ENCODE measurements at regions of chr17 and their contacts with region 1.

Region 1: GRCh38 chr17:62703775-62704378 is 76.4 kb downstream of the MRC2 start:
- DNase-seq: peak; percentile 47 to 79 (median 68)
- H3K4me3 ChIP-seq: peak overlapping the region in 2 of 4 donors; percentile 24 to 87
- H3K27ac ChIP-seq: peak overlapping the region in 3 of 5 donors; percentile 29 to 68 (median 39)
- H3K4me1 ChIP-seq: peaks cover 4 to 11% of the 10 kb centered on the region in 2 donors
- H3K27me3 ChIP-seq: no peaks in the 10 kb centered on the region
- CTCF ChIP-seq: peak; percentile 41 to 89 (median 72)
- POLR2A ChIP-seq: no peak

Region 2: GRCh38 chr17:62739645-62740388 is 35.9 kb after region 1 on chr17:
- intact Hi-C with region 1: no loop called
- DNase-seq: no peak
- H3K4me3 ChIP-seq: no peak overlapping the region
- H3K27ac ChIP-seq: no peak overlapping the region
- H3K4me1 ChIP-seq: no peaks in the 10 kb centered on the region
- H3K27me3 ChIP-seq: no peaks in the 10 kb centered on the region
- CTCF ChIP-seq: no peak
- POLR2A ChIP-seq: no peak

Region 3: GRCh38 chr17:62833395-62833794 is 129.5 kb after region 1 on chr17:
- intact Hi-C with region 1: no loop called
- DNase-seq: no peak
- H3K4me3 ChIP-seq: no peak overlapping the region
- H3K27ac ChIP-seq: no peak overlapping the region
- H3K4me1 ChIP-seq: no peaks in the 10 kb centered on the region
- H3K27me3 ChIP-seq: no peaks in the 10 kb centered on the region
- CTCF ChIP-seq: no peak
- POLR2A ChIP-seq: no peak

Region 4: GRCh38 chr17:62968445-62968923 is 264.6 kb after region 1 on chr17:
- intact Hi-C with region 1: loop called (anchors 2 to 5 kb)
- DNase-seq: peak; percentile 41 to 71 (median 56)
- H3K4me3 ChIP-seq: peak overlapping the region in 1 of 4 donors; percentile 95
- H3K27ac ChIP-seq: no peak overlapping the region
- H3K4me1 ChIP-seq: peaks cover 13 to 18% of the 10 kb centered on the region in 2 donors
- H3K27me3 ChIP-seq: no peaks in the 10 kb centered on the region
- CTCF ChIP-seq: peak; percentile 54 to 95 (median 80)
- POLR2A ChIP-seq: no peak

Region 5: DNA sequence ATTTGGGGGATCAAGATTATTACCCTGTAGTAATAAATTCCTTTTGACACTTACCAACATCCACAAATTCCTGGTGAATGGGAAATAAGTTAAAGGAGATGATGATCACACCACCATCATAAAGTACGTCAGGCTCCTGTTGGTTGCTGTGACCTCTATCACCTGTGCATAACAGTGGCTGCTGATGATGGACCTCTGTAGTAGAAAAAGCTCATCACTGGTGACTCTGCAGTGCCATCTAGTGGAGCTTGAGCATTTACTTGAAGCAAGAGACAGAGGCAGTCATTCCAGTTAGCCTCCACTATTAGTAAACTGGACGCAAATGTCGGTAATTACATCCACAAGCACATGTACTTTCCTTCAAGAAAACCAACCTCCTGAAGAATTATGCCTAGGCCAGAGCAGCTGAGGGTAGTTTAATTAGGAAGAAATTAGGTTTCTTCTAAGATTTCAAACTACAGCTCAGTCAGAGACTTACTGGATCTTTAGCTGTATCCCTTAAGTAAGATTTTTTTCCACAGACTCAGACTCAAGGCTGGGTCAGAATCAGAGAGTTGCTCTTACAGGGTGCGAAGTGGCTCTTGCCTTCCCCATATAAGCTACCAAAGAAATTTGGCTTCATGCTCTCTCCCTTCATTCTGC is 702.9 kb after region 1 on chr17:
- intact Hi-C with region 1: loop called (anchors 10 kb)
- DNase-seq: peak; percentile 73 to 93 (median 78)
- H3K4me3 ChIP-seq: no peak overlapping the region
- H3K27ac ChIP-seq: no peak overlapping the region
- H3K4me1 ChIP-seq: no peaks in the 10 kb centered on the region
- H3K27me3 ChIP-seq: no peaks in the 10 kb centered on the region
- CTCF ChIP-seq: peak; percentile 80 to 88 (median 88)
- POLR2A ChIP-seq: no peak

Region 6: GRCh38 chr17:63419949-63420867 is 716.3 kb after region 1 on chr17:
- intact Hi-C with region 1: loop called in 1 of 2 experiments (anchors 10 kb)
- DNase-seq: no peak
- H3K4me3 ChIP-seq: no peak overlapping the region
- H3K27ac ChIP-seq: no peak overlapping the region
- H3K4me1 ChIP-seq: no peaks in the 10 kb centered on the region
- H3K27me3 ChIP-seq: no peaks in the 10 kb centered on the region
- CTCF ChIP-seq: no peak
- POLR2A ChIP-seq: no peak

Measured in adrenal gland (tissue), 19 donors.